ENCODE measurements at regions of chr20 and their contacts with region 1.

Region 1: GRCh38 chr20:63955827-63956663 is at the start of gene UCKL1:
- DNase-seq: peak; percentile 90 to 94 (median 93)
- H3K4me3 ChIP-seq: peak within 1 kb of the TSS; percentile 34 to 79
- H3K4me3 Mint-ChIP-seq: peak within 1 kb of the TSS; percentile 77 to 88 (median 86)
- H3K27ac ChIP-seq: peak within 1 kb of the TSS; percentile 87
- H3K27ac Mint-ChIP-seq: peak within 1 kb of the TSS; percentile 84 to 93 (median 87)
- H3K4me1 ChIP-seq: peaks cover 43% of the 10 kb centered on the region
- H3K4me1 Mint-ChIP-seq: peaks cover 10 to 47% (median 29%) of the 10 kb centered on the region in 4 donors
- H3K27me3 ChIP-seq: no peaks in the 10 kb centered on the region
- H3K27me3 Mint-ChIP-seq: no peaks in the 10 kb centered on the region
- total RNA-seq, gene UCKL1: 53.7 to 55.1 TPM

Region 2: GRCh38 chr20:63707549-63708300 is 248.3 kb before region 1 on chr20 and contains the starts of genes ARFRP1 and ZGPAT:
- CTCF ChIA-PET with region 1: no interaction called
- POLR2A ChIA-PET with region 1: interaction called, 7 read pairs
- intact Hi-C with region 1: loop called (anchors 1 kb)
- DNase-seq: peak; percentile 85 to 91 (median 86)
- H3K4me3 ChIP-seq: peak within 1 kb of the TSS; percentile 57 to 87
- H3K4me3 Mint-ChIP-seq: peak within 1 kb of the TSS; percentile 86 to 95 (median 90)
- H3K27ac ChIP-seq: peak within 1 kb of the TSS; percentile 65
- H3K27ac Mint-ChIP-seq: peak within 1 kb of the TSS; percentile 86 to 95 (median 90)
- H3K4me1 ChIP-seq: peaks cover 52% of the 10 kb centered on the region
- H3K4me1 Mint-ChIP-seq: peaks cover 24 to 61% (median 38%) of the 10 kb centered on the region in 4 donors
- H3K27me3 ChIP-seq: no peaks in the 10 kb centered on the region
- H3K27me3 Mint-ChIP-seq: no peaks in the 10 kb centered on the region
- total RNA-seq, gene ARFRP1: 85.6 to 92.0 TPM
- total RNA-seq, gene ZGPAT: 51.8 to 55.3 TPM

Region 3: GRCh38 chr20:63942250-63942959 is 13.6 kb before region 1 on chr20:
- CTCF ChIA-PET with region 1: no interaction called
- POLR2A ChIA-PET with region 1: interaction called, 16 read pairs
- intact Hi-C with region 1: no loop called
- DNase-seq: peak in 4 of 5 donors; percentile 32 to 39 (median 33)
- H3K4me3 ChIP-seq: no peak overlapping the region
- H3K4me3 Mint-ChIP-seq: peak overlapping the region in 4 of 8 donors; percentile 35 to 64 (median 48)
- H3K27ac ChIP-seq: peak overlapping the region; percentile 51
- H3K27ac Mint-ChIP-seq: peak overlapping the region in 6 of 7 donors; percentile 70 to 92 (median 80)
- H3K4me1 ChIP-seq: peaks cover 30% of the 10 kb centered on the region
- H3K4me1 Mint-ChIP-seq: peaks cover 10 to 34% (median 25%) of the 10 kb centered on the region in 4 donors
- H3K27me3 ChIP-seq: no peaks in the 10 kb centered on the region
- H3K27me3 Mint-ChIP-seq: no peaks in the 10 kb centered on the region

Region 4: DNA sequence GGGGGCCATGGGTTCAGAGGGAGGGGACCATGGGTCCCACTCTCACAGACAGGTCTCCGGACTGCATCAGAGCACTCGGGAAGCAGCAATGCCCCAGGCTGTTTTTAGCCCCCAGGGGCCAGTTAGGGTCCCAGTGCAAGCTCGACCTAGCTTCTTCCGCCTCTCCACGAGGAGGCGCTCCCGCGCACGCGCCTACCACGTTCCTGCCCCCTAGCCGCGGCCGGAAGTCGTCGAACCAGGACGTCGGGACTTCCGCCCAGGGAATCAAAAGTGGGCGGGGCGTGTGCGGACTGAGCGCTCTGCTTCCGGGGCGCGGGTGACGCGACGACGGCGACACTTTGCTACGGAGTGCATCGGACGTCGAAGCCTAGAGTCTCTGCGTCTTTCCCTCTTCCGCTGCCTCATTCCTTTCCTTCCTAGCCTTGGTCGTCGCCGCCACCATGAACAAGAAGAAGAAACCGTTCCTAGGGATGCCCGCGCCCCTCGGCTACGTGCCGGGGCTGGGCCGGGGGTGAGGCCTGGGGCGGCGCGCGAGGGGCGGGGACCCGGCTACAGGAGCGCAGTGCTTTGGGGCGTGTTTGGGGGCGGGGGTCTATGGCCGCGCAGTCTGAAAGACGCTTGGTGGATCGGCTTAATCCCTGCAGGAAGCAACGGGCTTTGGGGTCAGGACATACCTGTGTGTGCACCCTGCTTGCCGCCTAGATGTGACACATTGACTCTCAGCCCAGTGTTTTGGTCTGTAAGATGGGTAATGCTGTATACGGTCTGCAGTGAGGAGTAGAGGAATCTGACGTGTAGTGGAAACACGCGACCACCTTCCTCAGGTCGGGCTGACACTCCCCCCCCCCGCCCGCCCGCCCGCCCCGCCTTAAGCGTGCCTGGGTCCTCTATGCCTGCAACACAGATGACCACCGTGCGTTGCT is 25.0 kb after region 1 on chr20 and contains the start of gene PRPF6:
- CTCF ChIA-PET with region 1: interaction called, 10 read pairs
- POLR2A ChIA-PET with region 1: interaction called, 27 read pairs
- intact Hi-C with region 1: loop called (anchors 1 kb)
- DNase-seq: peak; percentile 91 to 94 (median 94)
- H3K4me3 ChIP-seq: peak within 1 kb of the TSS; percentile 42 to 67
- H3K4me3 Mint-ChIP-seq: peak within 1 kb of the TSS; percentile 90 to 99 (median 93)
- H3K27ac ChIP-seq: peak within 1 kb of the TSS; percentile 69
- H3K27ac Mint-ChIP-seq: peak within 1 kb of the TSS; percentile 95 to 99 (median 98)
- H3K4me1 ChIP-seq: peaks cover 54% of the 10 kb centered on the region
- H3K4me1 Mint-ChIP-seq: peaks cover 48 to 72% (median 60%) of the 10 kb centered on the region in 4 donors
- H3K27me3 ChIP-seq: no peaks in the 10 kb centered on the region
- H3K27me3 Mint-ChIP-seq: no peaks in the 10 kb centered on the region
- total RNA-seq, gene PRPF6: 86.4 to 88.7 TPM

Region 5: DNA sequence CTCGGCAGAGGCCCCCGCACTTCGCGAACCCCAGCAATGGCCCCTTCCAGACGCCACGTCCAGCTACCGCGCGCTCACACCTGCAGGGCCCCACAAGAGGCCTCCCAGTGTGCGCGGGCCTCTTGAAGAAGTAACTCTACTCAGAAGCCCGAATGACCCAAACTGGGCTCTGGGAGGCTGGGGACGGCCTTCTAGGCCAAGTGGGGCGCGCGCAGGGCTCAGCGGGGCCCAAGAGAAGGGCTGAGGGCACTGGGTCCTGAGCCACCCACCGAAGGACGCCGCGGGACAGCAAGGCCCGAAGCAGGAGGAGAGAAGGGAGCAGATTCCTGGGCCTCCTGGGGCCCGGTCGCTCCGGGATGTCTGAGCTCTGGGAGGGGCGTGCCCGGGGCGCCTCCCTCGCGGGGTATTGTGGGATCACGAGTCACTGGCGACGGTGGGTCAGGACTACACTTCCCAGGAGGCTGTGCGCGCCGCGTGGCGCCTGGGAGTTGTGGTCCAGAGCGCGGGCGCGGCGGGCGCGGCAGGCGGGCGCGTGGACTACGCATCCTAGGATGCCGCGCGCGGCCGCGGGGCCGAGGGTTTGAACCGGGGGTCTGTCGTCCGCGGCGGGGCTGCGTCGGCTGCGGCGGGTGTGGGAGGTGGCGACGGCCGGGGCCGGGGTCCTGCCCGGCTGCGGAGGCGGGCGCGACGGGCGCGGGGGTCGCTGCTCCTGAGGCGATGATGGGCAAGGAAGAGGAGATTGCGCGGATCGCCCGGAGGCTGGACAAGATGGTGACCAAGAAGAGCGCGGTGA is 106.7 kb after region 1 on chr20 and contains the start of gene TCEA2:
- CTCF ChIA-PET with region 1: no interaction called
- POLR2A ChIA-PET with region 1: interaction called, 10 read pairs
- intact Hi-C with region 1: loop called (anchors 1 kb)
- DNase-seq: peak; percentile 90 to 91 (median 90)
- H3K4me3 ChIP-seq: peak within 1 kb of the TSS; percentile 42 to 57
- H3K4me3 Mint-ChIP-seq: peak within 1 kb of the TSS; percentile 80 to 93 (median 88)
- H3K27ac ChIP-seq: peak within 1 kb of the TSS; percentile 59
- H3K27ac Mint-ChIP-seq: peak within 1 kb of the TSS; percentile 50 to 92 (median 86)
- H3K4me1 ChIP-seq: peaks cover 57% of the 10 kb centered on the region
- H3K4me1 Mint-ChIP-seq: peaks cover 21 to 47% (median 35%) of the 10 kb centered on the region in 4 donors
- H3K27me3 ChIP-seq: no peaks in the 10 kb centered on the region
- H3K27me3 Mint-ChIP-seq: no peaks in the 10 kb centered on the region
- total RNA-seq, gene TCEA2: 43.3 to 45.9 TPM